Activated CD8-positive, alpha-beta T cell treated with anti-CD3 and anti-CD28 coated beads, Interleukin-2, amount 10 ng/mL, durations not matched to agents 7 days and 5 days (primary cell): ENCODE measurements at regions of chr3 and their contacts with region 1.

Region 1: GRCh38 chr3:48400824-48401433 is 28.9 kb downstream of the FBXW12 start:
- DNase-seq: peak; percentile 76
- ATAC-seq: peak; percentile 88
- H3K4me3 Mint-ChIP-seq: no peak overlapping the region
- H3K27ac Mint-ChIP-seq: no peak overlapping the region
- H3K4me1 Mint-ChIP-seq: peaks cover 2% of the 10 kb centered on the region
- H3K27me3 Mint-ChIP-seq: peaks cover under 1% of the 10 kb centered on the region

Region 2: GRCh38 chr3:47601281-47601680 is 799.6 kb before region 1 on chr3:
- CTCF ChIA-PET with region 1: no interaction called
- POLR2A ChIA-PET with region 1: no interaction called
- DNase-seq: no peak
- ATAC-seq: no peak
- H3K4me3 Mint-ChIP-seq: no peak overlapping the region
- H3K27ac Mint-ChIP-seq: no peak overlapping the region
- H3K4me1 Mint-ChIP-seq: no peaks in the 10 kb centered on the region
- H3K27me3 Mint-ChIP-seq: no peaks in the 10 kb centered on the region

Region 3: GRCh38 chr3:48194446-48195071 is 206.4 kb before region 1 on chr3:
- CTCF ChIA-PET with region 1: interaction called, 12 read pairs
- POLR2A ChIA-PET with region 1: no interaction called
- DNase-seq: peak; percentile 41
- ATAC-seq: peak; percentile 22
- H3K4me3 Mint-ChIP-seq: no peak overlapping the region
- H3K27ac Mint-ChIP-seq: no peak overlapping the region
- H3K4me1 Mint-ChIP-seq: no peaks in the 10 kb centered on the region
- H3K27me3 Mint-ChIP-seq: no peaks in the 10 kb centered on the region

Region 4: GRCh38 chr3:48268381-48269183 is 132.3 kb before region 1 on chr3:
- CTCF ChIA-PET with region 1: interaction called, 29 read pairs
- POLR2A ChIA-PET with region 1: no interaction called
- DNase-seq: peak; percentile 89
- ATAC-seq: peak; percentile 97
- H3K4me3 Mint-ChIP-seq: peak overlapping the region; percentile 60
- H3K27ac Mint-ChIP-seq: peak overlapping the region; percentile 85
- H3K4me1 Mint-ChIP-seq: peaks cover 38% of the 10 kb centered on the region
- H3K27me3 Mint-ChIP-seq: no peaks in the 10 kb centered on the region

Region 5: GRCh38 chr3:48285132-48285531 is 115.8 kb before region 1 on chr3:
- CTCF ChIA-PET with region 1: interaction called, 10 read pairs
- POLR2A ChIA-PET with region 1: no interaction called
- DNase-seq: no peak
- ATAC-seq: no peak
- H3K4me3 Mint-ChIP-seq: no peak overlapping the region
- H3K27ac Mint-ChIP-seq: no peak overlapping the region
- H3K4me1 Mint-ChIP-seq: peaks cover 2% of the 10 kb centered on the region
- H3K27me3 Mint-ChIP-seq: no peaks in the 10 kb centered on the region

Region 6: GRCh38 chr3:48507351-48508061 is 106.6 kb after region 1 on chr3:
- CTCF ChIA-PET with region 1: interaction called, 45 read pairs
- POLR2A ChIA-PET with region 1: no interaction called
- DNase-seq: peak; percentile 86
- ATAC-seq: peak; percentile 87
- H3K4me3 Mint-ChIP-seq: no peak overlapping the region
- H3K27ac Mint-ChIP-seq: peak overlapping the region; percentile 81
- H3K4me1 Mint-ChIP-seq: peaks cover 53% of the 10 kb centered on the region
- H3K27me3 Mint-ChIP-seq: peaks cover 6% of the 10 kb centered on the region

Region 7: DNA sequence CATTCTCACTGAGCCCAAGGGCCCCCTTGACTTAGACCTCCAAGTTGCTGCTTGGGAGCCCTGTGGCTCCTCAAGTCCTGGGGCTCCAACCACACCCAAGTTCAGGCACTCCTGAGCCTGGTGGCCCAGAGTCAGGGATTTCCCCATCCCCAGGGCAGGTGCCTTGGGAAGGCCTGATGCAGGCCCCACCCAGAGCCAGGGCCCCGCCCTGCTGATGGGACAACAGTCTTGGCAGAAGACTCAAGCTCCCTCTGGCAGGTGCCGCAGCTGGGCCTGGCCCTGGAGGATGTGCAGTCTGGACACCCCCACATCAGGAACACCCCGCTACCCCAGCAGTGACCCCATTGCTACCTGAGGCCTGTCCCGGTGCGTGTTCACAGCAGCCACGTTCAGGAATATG is 120.7 kb after region 1 on chr3:
- CTCF ChIA-PET with region 1: no interaction called
- POLR2A ChIA-PET with region 1: no interaction called
- DNase-seq: no peak
- ATAC-seq: no peak
- H3K4me3 Mint-ChIP-seq: no peak overlapping the region
- H3K27ac Mint-ChIP-seq: no peak overlapping the region
- H3K4me1 Mint-ChIP-seq: peaks cover 43% of the 10 kb centered on the region
- H3K27me3 Mint-ChIP-seq: no peaks in the 10 kb centered on the region

Region 8: GRCh38 chr3:48548729-48549705 is 148.1 kb after region 1 on chr3:
- CTCF ChIA-PET with region 1: interaction called, 179 read pairs
- POLR2A ChIA-PET with region 1: no interaction called
- DNase-seq: peak; percentile 90
- ATAC-seq: peak; percentile 97
- H3K4me3 Mint-ChIP-seq: no peak overlapping the region
- H3K27ac Mint-ChIP-seq: peak overlapping the region; percentile 49
- H3K4me1 Mint-ChIP-seq: peaks cover 28% of the 10 kb centered on the region
- H3K27me3 Mint-ChIP-seq: no peaks in the 10 kb centered on the region

Region 9: GRCh38 chr3:48581621-48582481 is 180.9 kb after region 1 on chr3:
- CTCF ChIA-PET with region 1: no interaction called
- POLR2A ChIA-PET with region 1: no interaction called
- DNase-seq: no peak
- ATAC-seq: no peak
- H3K4me3 Mint-ChIP-seq: no peak overlapping the region
- H3K27ac Mint-ChIP-seq: no peak overlapping the region
- H3K4me1 Mint-ChIP-seq: no peaks in the 10 kb centered on the region
- H3K27me3 Mint-ChIP-seq: no peaks in the 10 kb centered on the region

Region 10: DNA sequence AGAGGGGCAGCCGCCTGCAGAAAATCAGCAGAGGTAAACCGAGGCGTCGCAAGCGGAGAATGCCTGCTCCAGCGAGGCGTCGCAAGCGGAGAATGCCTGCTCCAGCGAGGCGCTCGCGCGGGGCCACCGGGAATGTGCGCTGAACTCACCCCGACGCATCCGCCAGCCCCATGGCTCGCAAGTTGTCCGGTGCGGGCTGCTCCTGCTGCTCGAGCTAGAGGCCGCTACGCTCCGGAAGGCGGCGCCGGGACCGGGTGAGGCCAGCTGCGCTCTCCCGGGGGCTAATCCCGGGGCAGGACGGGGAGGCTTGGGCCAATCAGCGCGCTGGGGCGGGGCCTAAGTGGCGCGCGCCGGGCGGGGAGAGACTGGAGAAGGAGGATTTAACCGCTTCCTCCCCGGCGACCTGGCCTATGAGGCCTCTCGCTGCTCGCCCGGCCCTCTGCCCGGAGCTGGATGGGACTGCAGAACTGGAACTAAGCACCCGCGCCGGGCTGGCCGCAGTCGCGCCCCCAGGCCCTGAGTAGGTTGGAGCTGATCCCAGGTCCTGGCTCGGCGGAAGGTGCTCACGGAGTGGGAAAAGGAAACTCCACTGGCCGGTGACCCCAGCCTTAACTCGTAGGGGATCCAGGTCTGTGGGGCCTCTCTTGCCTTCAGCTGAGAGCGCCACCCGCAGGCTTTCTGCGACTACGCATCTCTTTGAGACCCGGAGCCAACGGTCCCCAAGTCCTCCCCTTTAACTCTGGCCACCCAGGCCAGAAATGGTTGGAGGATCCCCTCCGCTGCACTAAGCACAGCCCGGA is 234.5 kb after region 1 on chr3 and contains the start of gene SLC26A6:
- CTCF ChIA-PET with region 1: interaction called, 17 read pairs
- POLR2A ChIA-PET with region 1: no interaction called
- DNase-seq: peak; percentile 95
- ATAC-seq: peak; percentile 97
- H3K4me3 Mint-ChIP-seq: peak within 1 kb of the TSS; percentile 89
- H3K27ac Mint-ChIP-seq: peak within 1 kb of the TSS; percentile 87
- H3K4me1 Mint-ChIP-seq: peaks cover 30% of the 10 kb centered on the region
- H3K27me3 Mint-ChIP-seq: no peaks in the 10 kb centered on the region
- total RNA-seq, gene SLC26A6: 58.0 to 61.5 TPM